Breast epithelium (tissue), 4 donors: ENCODE measurements at regions of chr6 and their contacts with region 1.

Region 1: GRCh38 chr6:147604373-147604772 is 95.9 kb downstream of the SAMD5 start:
- DNase-seq: peak in 1 of 2 donors; percentile 47
- H3K4me3 ChIP-seq: no peak overlapping the region
- H3K27ac ChIP-seq: peak overlapping the region; percentile 25 to 32
- H3K4me1 ChIP-seq: no peaks in the 10 kb centered on the region
- H3K27me3 ChIP-seq: no peaks in the 10 kb centered on the region
- CTCF ChIP-seq: no peak
- POLR2A ChIP-seq: no peak

Region 2: DNA sequence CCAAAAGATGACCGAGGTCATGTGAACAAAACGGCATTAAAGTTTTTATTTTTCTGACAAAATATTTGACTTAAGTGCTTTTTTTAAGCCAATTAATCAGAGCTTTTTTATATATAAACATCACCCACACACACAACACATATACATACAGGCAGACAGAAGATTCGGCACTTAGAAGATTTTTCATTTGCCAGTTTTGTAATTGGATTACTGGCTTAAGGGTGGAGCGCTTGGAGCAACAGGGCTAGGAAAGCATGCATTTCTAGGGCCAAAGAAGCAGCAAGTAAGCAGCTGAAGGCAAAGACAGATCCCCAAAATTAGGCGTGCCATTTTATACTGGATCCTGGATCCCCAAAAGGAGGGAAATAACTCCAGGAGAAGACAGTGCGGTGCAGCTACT is 65.6 kb before region 1 on chr6:
- intact Hi-C with region 1: loop called (anchors 2 kb)
- DNase-seq: no peak
- H3K4me3 ChIP-seq: no peak overlapping the region
- H3K27ac ChIP-seq: no peak overlapping the region
- H3K4me1 ChIP-seq: no peaks in the 10 kb centered on the region
- H3K27me3 ChIP-seq: no peaks in the 10 kb centered on the region
- CTCF ChIP-seq: no peak
- POLR2A ChIP-seq: no peak

Region 3: DNA sequence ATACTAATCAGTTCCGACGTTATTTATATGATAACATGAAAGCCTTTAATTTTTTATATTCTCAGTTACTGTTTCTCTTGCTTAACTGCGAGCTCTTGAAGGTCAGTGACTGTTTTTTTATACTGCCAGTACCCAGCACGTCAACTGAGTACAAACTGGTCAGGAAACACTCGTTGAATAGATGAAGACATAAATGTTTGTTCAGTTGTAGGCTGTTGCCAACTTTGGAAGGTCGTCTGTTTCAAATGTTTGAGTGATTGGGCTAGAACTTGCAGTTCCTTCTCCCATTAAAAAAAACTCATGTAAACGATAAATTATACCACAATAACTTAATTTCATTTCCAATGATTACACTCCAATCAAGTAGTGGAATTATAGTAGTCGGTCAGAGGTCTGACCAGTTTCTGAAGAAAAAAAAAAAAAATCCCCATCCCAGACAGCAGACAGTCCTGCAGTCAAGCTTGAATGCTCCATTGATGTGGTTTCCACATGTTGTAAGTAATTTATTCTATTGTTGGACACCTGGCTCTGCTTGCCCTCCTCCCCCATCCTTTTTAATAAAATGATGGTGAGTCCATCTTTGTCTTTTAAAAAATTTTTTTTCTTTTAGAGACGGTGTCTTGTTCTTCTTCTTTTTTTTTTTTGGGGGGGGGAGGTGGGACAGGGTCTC is 819.4 kb after region 1 on chr6:
- intact Hi-C with region 1: no loop called
- DNase-seq: no peak
- H3K4me3 ChIP-seq: no peak overlapping the region
- H3K27ac ChIP-seq: no peak overlapping the region
- H3K4me1 ChIP-seq: no peaks in the 10 kb centered on the region
- H3K27me3 ChIP-seq: no peaks in the 10 kb centered on the region
- CTCF ChIP-seq: no peak
- POLR2A ChIP-seq: no peak